Endothelial cell of umbilical vein (primary cell): ENCODE measurements at regions of chr4 and their contacts with region 1.

Region 1: DNA sequence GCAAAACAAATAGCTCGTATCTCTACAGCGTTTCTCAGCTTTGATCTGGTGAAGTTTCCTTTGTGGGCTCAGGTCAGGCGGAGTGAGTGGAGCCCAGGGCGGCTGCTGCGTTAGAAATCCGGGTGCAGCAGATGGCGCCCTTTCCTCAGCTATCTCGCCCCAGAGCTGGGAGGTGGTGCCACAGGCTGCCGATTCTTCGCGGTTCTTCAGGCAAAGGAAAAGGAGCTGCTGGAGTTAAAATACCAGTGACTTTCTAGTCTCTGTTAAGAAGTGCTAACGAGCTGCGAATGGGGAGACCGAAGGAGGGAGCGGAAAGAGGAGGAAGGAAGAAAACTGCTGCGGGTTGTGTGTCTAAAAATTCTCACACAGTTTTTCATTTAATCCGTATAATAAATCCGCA is 114.6 kb downstream of the CPE start:
- DNase-seq: peak; percentile 64
- H3K4me3 ChIP-seq: peak overlapping the region in 1 of 3 experiments; percentile 31
- H3K27ac ChIP-seq: no peak overlapping the region
- H3K4me1 ChIP-seq: peaks cover 3% of the 10 kb centered on the region
- H3K27me3 ChIP-seq: no peaks in the 10 kb centered on the region
- CTCF ChIP-seq: peak; percentile 71 to 81
- POLR2A ChIP-seq: no peak

Region 2: GRCh38 chr4:165288639-165289422 is 204.5 kb before region 1 on chr4:
- CTCF ChIA-PET with region 1: no interaction called
- POLR2A ChIA-PET with region 1: no interaction called
- dilution Hi-C with region 1: no loop called
- intact Hi-C with region 1: no loop called
- DNase-seq: no peak
- H3K4me3 ChIP-seq: no peak overlapping the region
- H3K27ac ChIP-seq: no peak overlapping the region
- H3K4me1 ChIP-seq: no peaks in the 10 kb centered on the region
- H3K27me3 ChIP-seq: no peaks in the 10 kb centered on the region
- CTCF ChIP-seq: no peak
- POLR2A ChIP-seq: no peak

Region 3: GRCh38 chr4:165425629-165426028 is 67.7 kb before region 1 on chr4:
- CTCF ChIA-PET with region 1: no interaction called
- POLR2A ChIA-PET with region 1: no interaction called
- dilution Hi-C with region 1: no loop called
- intact Hi-C with region 1: no loop called
- DNase-seq: no peak
- H3K4me3 ChIP-seq: no peak overlapping the region
- H3K27ac ChIP-seq: no peak overlapping the region
- H3K4me1 ChIP-seq: no peaks in the 10 kb centered on the region
- H3K27me3 ChIP-seq: no peaks in the 10 kb centered on the region
- CTCF ChIP-seq: no peak
- POLR2A ChIP-seq: no peak

Region 4: GRCh38 chr4:165476214-165477098 is 16.9 kb before region 1 on chr4:
- CTCF ChIA-PET with region 1: interaction called, 11 read pairs
- POLR2A ChIA-PET with region 1: no interaction called
- dilution Hi-C with region 1: no loop called
- intact Hi-C with region 1: no loop called
- DNase-seq: peak; percentile 33
- H3K4me3 ChIP-seq: no peak overlapping the region
- H3K27ac ChIP-seq: no peak overlapping the region
- H3K4me1 ChIP-seq: no peaks in the 10 kb centered on the region
- H3K27me3 ChIP-seq: no peaks in the 10 kb centered on the region
- CTCF ChIP-seq: no peak
- POLR2A ChIP-seq: no peak

Region 5: DNA sequence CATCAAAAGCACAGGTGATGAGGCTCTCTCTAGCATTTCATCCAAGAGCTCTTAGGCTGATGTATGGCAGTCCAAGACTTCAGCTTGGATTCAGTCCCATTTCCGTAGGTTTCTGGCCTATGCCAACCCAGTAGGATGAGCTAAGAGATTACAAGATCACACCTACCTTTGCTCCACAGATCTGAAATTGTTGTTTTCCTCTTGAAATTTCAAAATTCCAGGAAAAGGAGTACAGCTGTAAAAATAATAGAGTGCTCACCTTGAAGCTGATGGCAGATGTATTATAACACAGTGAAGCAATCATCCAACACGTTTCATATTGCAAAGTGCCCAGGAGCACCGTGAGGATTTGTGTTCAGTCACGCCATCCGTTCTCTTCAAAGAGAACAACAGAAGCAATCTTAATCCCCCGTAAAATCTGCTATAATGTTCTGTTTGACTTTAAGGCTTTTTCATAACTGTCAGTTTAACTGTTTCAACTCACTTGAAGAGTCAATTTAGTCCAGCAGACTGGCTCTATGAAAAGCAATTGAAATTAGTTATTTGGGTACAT is 23.0 kb after region 1 on chr4:
- CTCF ChIA-PET with region 1: interaction called, 23 read pairs
- POLR2A ChIA-PET with region 1: no interaction called
- dilution Hi-C with region 1: no loop called
- intact Hi-C with region 1: no loop called
- DNase-seq: no peak
- H3K4me3 ChIP-seq: no peak overlapping the region
- H3K27ac ChIP-seq: no peak overlapping the region
- H3K4me1 ChIP-seq: peaks cover 20% of the 10 kb centered on the region
- H3K27me3 ChIP-seq: no peaks in the 10 kb centered on the region
- CTCF ChIP-seq: no peak
- POLR2A ChIP-seq: no peak

Region 6: GRCh38 chr4:165537028-165537648 is 43.8 kb after region 1 on chr4:
- CTCF ChIA-PET with region 1: interaction called, 62 read pairs
- POLR2A ChIA-PET with region 1: no interaction called
- dilution Hi-C with region 1: no loop called
- intact Hi-C with region 1: loop called (anchors 1 kb)
- DNase-seq: peak; percentile 83
- H3K4me3 ChIP-seq: no peak overlapping the region
- H3K27ac ChIP-seq: no peak overlapping the region
- H3K4me1 ChIP-seq: no peaks in the 10 kb centered on the region
- H3K27me3 ChIP-seq: no peaks in the 10 kb centered on the region
- CTCF ChIP-seq: peak; percentile 34 to 47
- POLR2A ChIP-seq: no peak

Region 7: GRCh38 chr4:165873298-165874071 is 380.1 kb after region 1 on chr4:
- CTCF ChIA-PET with region 1: interaction called, 16 read pairs
- POLR2A ChIA-PET with region 1: no interaction called
- dilution Hi-C with region 1: no loop called
- intact Hi-C with region 1: loop called (anchors 5 kb)
- DNase-seq: no peak
- H3K4me3 ChIP-seq: peak overlapping the region; percentile 45 to 65 (median 58)
- H3K27ac ChIP-seq: peak overlapping the region; percentile 19
- H3K4me1 ChIP-seq: peaks cover 22% of the 10 kb centered on the region
- H3K27me3 ChIP-seq: peaks cover 0 to 2% of the 10 kb centered on the region in 2 experiments
- CTCF ChIP-seq: no peak
- POLR2A ChIP-seq: no peak

Region 8: GRCh38 chr4:166160412-166160811 is 667.1 kb after region 1 on chr4:
- CTCF ChIA-PET with region 1: interaction called, 21 read pairs
- POLR2A ChIA-PET with region 1: no interaction called
- dilution Hi-C with region 1: no loop called
- intact Hi-C with region 1: loop called (anchors 5 kb)
- DNase-seq: no peak
- H3K4me3 ChIP-seq: no peak overlapping the region
- H3K27ac ChIP-seq: no peak overlapping the region
- H3K4me1 ChIP-seq: no peaks in the 10 kb centered on the region
- H3K27me3 ChIP-seq: peaks cover 0 to 4% of the 10 kb centered on the region in 2 experiments
- CTCF ChIP-seq: no peak
- POLR2A ChIP-seq: no peak

Region 9: GRCh38 chr4:166252487-166253402 is 759.4 kb after region 1 on chr4:
- CTCF ChIA-PET with region 1: interaction called, 10 read pairs
- POLR2A ChIA-PET with region 1: no interaction called
- dilution Hi-C with region 1: no loop called
- intact Hi-C with region 1: loop called (anchors 2 kb)
- DNase-seq: peak; percentile 34
- H3K4me3 ChIP-seq: no peak overlapping the region
- H3K27ac ChIP-seq: no peak overlapping the region
- H3K4me1 ChIP-seq: no peaks in the 10 kb centered on the region
- H3K27me3 ChIP-seq: no peaks in the 10 kb centered on the region
- CTCF ChIP-seq: peak; percentile 54
- POLR2A ChIP-seq: no peak